ENCODE measurements at regions of chr1 and their contacts with region 1.

Region 1: DNA sequence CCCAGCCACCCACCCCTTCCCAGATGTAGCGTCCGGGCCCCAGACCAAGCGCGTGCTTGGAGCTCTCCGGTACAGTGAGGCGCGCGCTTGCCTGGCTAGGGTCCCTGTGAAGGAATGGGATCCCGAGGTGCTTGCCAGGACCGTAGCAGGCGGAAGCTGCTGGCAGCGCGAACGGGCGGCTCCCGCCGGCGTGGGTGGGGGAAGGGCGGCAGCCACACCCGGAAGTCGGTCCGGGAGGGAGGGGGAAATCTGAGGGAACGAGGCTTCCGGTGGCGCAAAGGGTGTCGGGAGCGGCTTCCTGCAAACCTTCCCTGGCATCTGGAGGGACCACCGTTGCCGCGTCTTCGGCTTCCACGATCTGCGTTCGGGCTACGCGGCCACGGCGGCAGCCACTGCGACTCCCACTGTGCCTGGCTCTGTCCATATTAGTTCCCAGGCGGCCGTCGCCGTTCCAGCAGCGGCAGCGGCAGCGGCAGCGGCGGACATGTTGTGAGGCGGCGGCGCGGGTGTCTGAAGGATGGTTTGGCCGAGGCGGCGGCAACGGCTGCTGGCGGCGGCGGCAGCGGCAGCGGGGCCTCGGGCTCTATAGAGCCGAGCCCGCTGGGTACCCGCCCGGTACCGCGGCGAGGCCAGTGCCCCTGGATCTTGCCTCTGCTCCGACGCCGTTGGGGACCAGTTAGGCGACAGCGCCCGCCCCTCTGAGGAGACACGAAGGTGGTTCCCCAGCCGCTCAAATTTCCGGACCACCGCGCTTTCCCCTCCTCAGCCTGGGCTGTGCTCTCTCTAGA is at the start of gene DR1:
- DNase-seq: peak; percentile 91 to 94 (median 94)
- ATAC-seq: peak; percentile 70
- H3K4me3 ChIP-seq: peak within 1 kb of the TSS; percentile 91
- H3K27ac ChIP-seq: peak within 1 kb of the TSS; percentile 99
- H3K4me1 ChIP-seq: peaks cover 0 to 4% of the 10 kb centered on the region in 2 experiments; a peak in 3 of 5 replicates
- H3K27me3 ChIP-seq: no peaks in the 10 kb centered on the region
- CTCF ChIP-seq: no peak
- EP300 ChIP-seq: peak; percentile 62
- POLR2A ChIP-seq: peak; percentile 98
- RAD21 ChIP-seq: no peak
- polyA plus RNA-seq, gene DR1: 8.1 to 9.3 TPM

Region 2: DNA sequence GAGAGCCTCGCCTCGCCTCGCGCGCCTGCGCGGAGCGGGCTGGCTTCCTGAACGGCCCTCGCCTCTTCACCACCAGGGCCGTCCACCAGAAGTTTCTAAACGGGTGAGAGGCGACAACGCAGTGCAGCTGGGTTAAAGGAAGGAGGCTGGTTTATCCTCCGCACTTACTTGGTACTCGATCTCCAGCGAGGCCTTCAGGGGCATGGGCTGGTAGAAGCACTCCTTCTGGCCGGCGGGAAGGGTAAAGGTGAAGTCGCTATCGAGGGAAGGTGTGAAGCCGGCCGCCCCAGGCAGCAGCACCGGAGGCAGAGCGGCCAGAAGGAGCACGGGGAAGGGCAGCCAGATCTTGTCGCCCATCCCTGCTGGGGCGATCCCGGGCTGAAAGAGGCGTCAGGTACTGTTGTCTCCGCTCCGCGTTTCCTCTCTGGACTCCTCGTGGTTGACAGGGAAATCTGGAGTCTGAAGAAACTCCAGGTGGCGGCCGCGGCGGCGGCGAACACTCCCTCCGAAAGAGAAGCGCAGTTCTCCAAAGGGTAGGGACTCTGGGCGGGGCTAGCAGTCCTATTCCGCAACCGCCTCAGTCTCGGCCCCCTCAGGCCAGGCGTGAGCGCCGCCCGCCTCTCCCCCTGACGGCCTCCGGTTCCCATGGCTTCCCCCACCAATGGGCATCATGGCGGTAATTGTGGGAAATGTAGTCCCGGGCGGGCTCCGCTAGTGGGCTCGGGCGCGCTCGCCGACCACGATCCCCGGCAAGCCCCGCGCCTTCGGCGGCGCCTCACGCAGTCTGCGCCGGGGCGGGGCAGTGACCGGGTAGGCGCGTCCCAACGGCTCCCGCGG is 165.7 kb before region 1 on chr1 and contains the start of gene TMED5:
- CTCF ChIA-PET with region 1: no interaction called
- POLR2A ChIA-PET with region 1: no interaction called
- in situ Hi-C with region 1: no loop called
- intact Hi-C with region 1: loop called (anchors 5 kb)
- DNase-seq: peak; percentile 87 to 98 (median 90)
- ATAC-seq: peak; percentile 92
- H3K4me3 ChIP-seq: peak within 1 kb of the TSS; percentile 70
- H3K27ac ChIP-seq: peak within 1 kb of the TSS; percentile 97
- H3K4me1 ChIP-seq: peaks cover 11 to 14% of the 10 kb centered on the region in 2 experiments; a peak in 2 of 5 replicates
- H3K27me3 ChIP-seq: no peaks in the 10 kb centered on the region
- CTCF ChIP-seq: 0 out of 6 replicates have a peak, but pooled peaks of 1 of the 3 experiments have one; percentile 23
- EP300 ChIP-seq: peak; percentile 51
- POLR2A ChIP-seq: peak; percentile 86
- RAD21 ChIP-seq: no peak
- polyA plus RNA-seq, gene TMED5: 28.7 to 43.9 TPM

Region 3: GRCh38 chr1:93358293-93358692 is 12.5 kb after region 1 on chr1:
- CTCF ChIA-PET with region 1: no interaction called
- POLR2A ChIA-PET with region 1: interaction called, 15 read pairs
- in situ Hi-C with region 1: no loop called
- intact Hi-C with region 1: no loop called
- DNase-seq: no peak
- ATAC-seq: peak; percentile 55
- H3K4me3 ChIP-seq: no peak overlapping the region
- H3K27ac ChIP-seq: peak overlapping the region; percentile 15; the same call in 1 of the 3 replicates
- H3K4me1 ChIP-seq: no peaks in the 10 kb centered on the region; a peak in 1 of 5 replicates
- H3K27me3 ChIP-seq: no peaks in the 10 kb centered on the region
- CTCF ChIP-seq: no peak
- EP300 ChIP-seq: no peak
- POLR2A ChIP-seq: no peak
- RAD21 ChIP-seq: no peak